Activated B cell treated with CpG ODN at 0.5 μM for 24 hours (primary cell): ENCODE measurements at regions of chr11 and their contacts with region 1.

Region 1: GRCh38 chr11:6667733-6668374 is 12.2 kb upstream of the DCHS1 start:
- DNase-seq: no peak
- ATAC-seq: peak; percentile 83
- H3K4me3 Mint-ChIP-seq: no peak overlapping the region
- H3K27ac Mint-ChIP-seq: no peak overlapping the region
- H3K4me1 Mint-ChIP-seq: peaks cover 4% of the 10 kb centered on the region
- H3K27me3 Mint-ChIP-seq: peaks cover 2% of the 10 kb centered on the region
- CTCF ChIP-seq: no peak

Region 2: DNA sequence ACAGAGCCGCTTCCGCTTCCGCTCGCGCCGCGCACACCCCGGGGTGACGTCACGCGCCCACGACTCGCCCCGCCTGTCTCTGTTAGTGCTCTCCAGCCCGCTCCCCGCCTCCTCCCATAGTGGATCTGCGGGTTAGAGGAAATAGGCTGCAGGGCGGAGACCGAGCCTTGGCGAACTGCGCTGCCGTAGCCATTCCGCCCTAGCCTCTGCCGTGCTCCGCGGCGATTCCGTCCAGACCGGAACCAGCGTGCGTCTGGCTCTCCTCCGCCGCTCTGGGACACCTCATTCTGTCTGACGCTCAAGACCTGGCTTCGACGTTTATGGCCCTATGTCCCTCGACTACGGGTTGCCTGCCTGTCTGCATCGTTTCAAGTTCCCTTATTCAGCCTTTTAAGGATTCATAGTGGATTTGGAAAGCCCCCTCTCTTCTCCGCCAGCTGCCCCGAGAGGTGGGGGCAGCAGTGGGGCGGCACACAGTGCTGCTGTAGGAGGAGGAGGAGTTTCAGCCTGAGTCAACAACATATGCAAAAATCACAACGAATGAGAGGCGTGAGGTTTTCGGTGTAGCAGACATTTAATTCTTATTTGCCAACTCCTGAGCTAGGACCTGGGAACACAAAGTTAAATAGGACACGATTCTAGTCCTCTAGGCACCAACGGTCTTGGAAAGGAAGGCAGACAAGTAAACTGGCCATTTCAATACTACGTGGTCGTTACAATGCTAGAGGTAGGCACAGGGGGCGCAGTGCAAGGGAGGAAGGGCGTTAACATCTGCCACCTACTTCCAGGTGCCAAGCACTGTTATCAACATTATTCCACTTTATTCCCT is 55.4 kb before region 1 on chr11 and contains the start of gene TAF10:
- CTCF ChIA-PET with region 1: interaction called, 26 read pairs
- POLR2A ChIA-PET with region 1: interaction called, 15 read pairs
- intact Hi-C with region 1: no loop called
- DNase-seq: peak; percentile 92
- ATAC-seq: peak; percentile 83
- H3K4me3 Mint-ChIP-seq: peak within 1 kb of the TSS; percentile 85
- H3K27ac Mint-ChIP-seq: peak within 1 kb of the TSS; percentile 85
- H3K4me1 Mint-ChIP-seq: peaks cover 29% of the 10 kb centered on the region
- H3K27me3 Mint-ChIP-seq: no peaks in the 10 kb centered on the region
- CTCF ChIP-seq: no peak
- total RNA-seq, gene TAF10: 149 and 154 TPM in 2 replicates

Region 3: GRCh38 chr11:6619004-6619745 is 48.7 kb before region 1 on chr11 and contains the start of gene TPP1:
- CTCF ChIA-PET with region 1: interaction called, 26 read pairs
- POLR2A ChIA-PET with region 1: interaction called, 18 read pairs
- intact Hi-C with region 1: loop called (anchors 1 kb)
- DNase-seq: peak; percentile 87
- ATAC-seq: peak; percentile 89
- H3K4me3 Mint-ChIP-seq: no peak within 1 kb of the TSS
- H3K27ac Mint-ChIP-seq: no peak within 1 kb of the TSS
- H3K4me1 Mint-ChIP-seq: peaks cover 7% of the 10 kb centered on the region
- H3K27me3 Mint-ChIP-seq: no peaks in the 10 kb centered on the region
- CTCF ChIP-seq: no peak
- total RNA-seq, gene TPP1: 98.2 and 123 TPM in 2 replicates